ENCODE measurements at regions of chr2 and their contacts with region 1.

Region 1: GRCh38 chr2:174465327-174465726 is 21.5 kb downstream of the GPR155 start:
- DNase-seq: no peak
- H3K4me3 Mint-ChIP-seq: no peak overlapping the region
- H3K27ac Mint-ChIP-seq: no peak overlapping the region
- H3K4me1 Mint-ChIP-seq: no peaks in the 10 kb centered on the region
- H3K27me3 Mint-ChIP-seq: no peaks in the 10 kb centered on the region

Region 2: DNA sequence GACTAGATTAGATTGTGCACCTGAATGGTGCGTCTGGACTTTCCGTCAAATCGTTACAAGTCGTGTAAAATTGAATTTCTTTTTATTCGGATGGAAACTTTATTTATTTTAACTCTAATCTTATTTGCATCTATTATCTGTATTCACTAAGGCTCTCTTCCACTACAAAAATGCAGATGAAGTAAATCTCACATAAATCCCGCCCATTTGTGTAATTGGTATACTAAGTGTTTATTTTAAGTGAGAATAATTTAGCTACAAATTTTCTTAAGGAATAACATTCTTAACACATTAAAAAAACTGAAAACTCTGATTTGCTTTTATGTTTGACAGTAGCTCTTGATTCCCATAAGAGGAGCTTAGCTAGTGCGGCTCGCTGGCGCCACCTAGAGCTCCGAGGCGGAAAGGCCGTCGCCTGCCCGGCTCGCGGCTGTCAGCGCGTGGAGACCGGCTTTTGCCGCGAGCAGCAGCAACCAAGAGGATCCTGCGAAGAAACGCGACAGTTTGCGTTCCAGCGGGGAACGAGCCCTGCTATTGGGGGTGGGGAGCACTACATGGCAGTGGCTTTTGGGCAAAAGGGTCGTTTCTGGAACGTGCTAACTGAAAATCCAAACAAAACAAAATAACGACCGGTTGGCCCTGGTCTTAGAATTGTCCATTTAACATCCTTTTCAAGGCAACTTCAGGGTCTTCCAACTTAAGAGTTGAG is 123.9 kb before region 1 on chr2:
- CTCF ChIA-PET with region 1: no interaction called
- intact Hi-C with region 1: no loop called
- DNase-seq: peak; percentile 93
- H3K4me3 Mint-ChIP-seq: peak overlapping the region; percentile 62
- H3K27ac Mint-ChIP-seq: peak overlapping the region; percentile 51
- H3K4me1 Mint-ChIP-seq: peaks cover 37% of the 10 kb centered on the region
- H3K27me3 Mint-ChIP-seq: peaks cover 62% of the 10 kb centered on the region

Region 3: GRCh38 chr2:174522553-174522952 is 57.2 kb after region 1 on chr2:
- CTCF ChIA-PET with region 1: interaction called, 34 read pairs
- intact Hi-C with region 1: loop called (anchors 1 kb)
- DNase-seq: no peak
- H3K4me3 Mint-ChIP-seq: no peak overlapping the region
- H3K27ac Mint-ChIP-seq: no peak overlapping the region
- H3K4me1 Mint-ChIP-seq: peaks cover 14% of the 10 kb centered on the region
- H3K27me3 Mint-ChIP-seq: no peaks in the 10 kb centered on the region

Region 4: DNA sequence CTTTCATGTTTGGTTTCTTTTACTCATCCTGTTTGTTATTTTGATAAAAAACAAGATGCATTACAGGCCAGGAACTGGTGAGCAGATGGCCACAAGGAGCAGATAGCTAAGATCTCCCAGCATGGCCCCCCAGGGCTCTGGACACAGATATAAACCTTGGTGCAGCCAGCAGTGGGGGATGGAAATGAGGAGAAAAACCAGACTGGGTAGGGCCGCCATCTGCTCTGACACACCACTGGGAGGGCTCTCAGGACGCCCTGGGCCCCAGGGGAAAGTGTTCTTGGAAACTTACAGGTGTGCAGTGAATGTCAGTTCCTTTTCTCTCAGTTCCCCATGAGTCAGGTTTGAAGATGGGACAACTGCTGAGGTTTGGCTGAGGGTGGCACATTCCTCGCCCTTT is 71.0 kb after region 1 on chr2:
- CTCF ChIA-PET with region 1: interaction called, 10 read pairs
- intact Hi-C with region 1: no loop called
- DNase-seq: no peak
- H3K4me3 Mint-ChIP-seq: no peak overlapping the region
- H3K27ac Mint-ChIP-seq: no peak overlapping the region
- H3K4me1 Mint-ChIP-seq: peaks cover 3% of the 10 kb centered on the region
- H3K27me3 Mint-ChIP-seq: no peaks in the 10 kb centered on the region

Region 5: DNA sequence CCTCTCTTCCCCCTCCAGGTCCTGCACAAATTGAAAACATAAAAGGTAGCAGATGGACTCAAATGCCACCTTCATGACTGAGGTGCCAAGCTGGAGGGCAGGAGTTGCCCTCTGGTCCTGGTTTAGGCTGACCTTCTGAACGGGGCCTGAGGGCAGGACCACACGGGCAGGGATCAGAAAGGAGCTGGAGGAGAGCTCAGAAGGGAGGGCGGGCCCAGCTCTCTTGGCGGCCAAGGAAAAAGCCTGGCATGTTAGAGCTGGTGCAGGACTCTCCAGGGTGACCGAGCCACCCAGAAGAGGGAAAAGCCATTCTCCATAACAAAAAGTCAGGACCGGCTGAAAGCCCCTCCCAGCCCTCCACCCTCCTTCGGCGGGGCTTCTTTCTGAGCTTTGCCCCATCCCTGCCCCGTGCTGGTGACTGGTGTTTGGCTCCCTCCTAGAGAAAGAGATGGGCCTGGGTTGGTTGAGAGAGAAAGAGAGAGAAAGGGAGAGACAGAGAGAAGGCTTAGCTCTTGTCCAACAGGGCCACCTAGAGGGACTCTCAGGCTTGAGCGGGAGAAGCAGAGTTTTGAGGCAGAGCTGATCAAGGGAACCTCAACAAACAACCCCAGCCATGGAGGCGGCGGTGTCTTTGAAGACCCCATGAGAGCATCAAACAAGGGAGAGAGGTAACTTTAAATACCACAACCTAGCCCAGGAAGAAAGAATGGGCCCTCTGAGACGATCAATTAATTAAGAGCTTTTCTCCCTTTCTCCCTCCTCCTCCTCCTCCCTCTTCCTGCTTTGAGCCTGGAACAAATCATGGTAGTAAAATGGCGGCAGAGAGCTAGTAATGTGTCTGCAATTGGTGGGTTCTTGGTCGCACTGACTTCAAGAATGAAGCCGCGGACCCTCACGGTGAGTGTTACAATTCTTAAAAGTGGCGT is 81.5 kb after region 1 on chr2:
- CTCF ChIA-PET with region 1: interaction called, 95 read pairs
- intact Hi-C with region 1: loop called (anchors 1 kb)
- DNase-seq: peak; percentile 74
- H3K4me3 Mint-ChIP-seq: no peak overlapping the region
- H3K27ac Mint-ChIP-seq: peak overlapping the region; percentile 3
- H3K4me1 Mint-ChIP-seq: peaks cover 9% of the 10 kb centered on the region
- H3K27me3 Mint-ChIP-seq: no peaks in the 10 kb centered on the region

Region 6: DNA sequence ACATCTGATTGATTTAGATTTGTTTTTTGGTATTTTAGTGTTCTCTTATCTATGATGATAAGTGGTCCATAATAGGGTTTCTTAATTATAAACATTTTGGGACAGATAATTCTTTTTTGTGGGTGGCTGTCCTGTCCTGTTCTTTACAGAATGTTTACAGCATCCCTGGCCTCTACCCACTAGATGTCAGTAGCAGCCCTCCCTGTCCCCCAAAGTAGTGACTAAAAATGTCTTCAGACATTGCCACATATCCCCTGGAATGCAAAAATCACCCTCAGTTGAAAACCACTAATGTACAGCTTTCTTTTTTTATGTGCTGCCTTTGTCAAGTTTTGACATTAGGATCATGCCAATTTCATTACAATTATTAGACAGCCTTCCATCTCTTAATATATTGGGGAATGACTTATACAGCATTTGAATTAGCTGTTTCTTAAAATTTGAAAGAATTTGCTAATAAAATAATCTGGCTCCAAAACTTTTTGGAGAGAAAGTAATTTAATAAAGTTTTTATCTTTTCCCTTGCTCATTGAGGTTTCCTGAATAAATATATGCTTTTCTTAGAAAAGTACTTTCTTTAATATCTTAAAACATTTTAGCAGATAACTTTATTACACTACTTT is 112.8 kb after region 1 on chr2:
- CTCF ChIA-PET with region 1: interaction called, 12 read pairs
- intact Hi-C with region 1: no loop called
- DNase-seq: peak; percentile 77
- H3K4me3 Mint-ChIP-seq: no peak overlapping the region
- H3K27ac Mint-ChIP-seq: peak overlapping the region; percentile 30
- H3K4me1 Mint-ChIP-seq: peaks cover 69% of the 10 kb centered on the region
- H3K27me3 Mint-ChIP-seq: no peaks in the 10 kb centered on the region